Dorsolateral prefrontal cortex (tissue), 120 donors: ENCODE measurements at regions of chr9 and their contacts with region 1.

Region 1: GRCh38 chr9:130343445-130343918 is 77.9 kb downstream of the HMCN2 start:
- DNase-seq: peak in 3 of 10 donors; percentile 13 to 27 (median 21)
- H3K4me3 ChIP-seq: no peak overlapping the region
- H3K27ac ChIP-seq: no peak overlapping the region
- H3K27me3 ChIP-seq: peaks cover 0 to 6% (median 0%) of the 10 kb centered on the region in 45 donors
- CTCF ChIP-seq: peak in 55 of 56 donors; percentile 34 to 75 (median 63)

Region 2: DNA sequence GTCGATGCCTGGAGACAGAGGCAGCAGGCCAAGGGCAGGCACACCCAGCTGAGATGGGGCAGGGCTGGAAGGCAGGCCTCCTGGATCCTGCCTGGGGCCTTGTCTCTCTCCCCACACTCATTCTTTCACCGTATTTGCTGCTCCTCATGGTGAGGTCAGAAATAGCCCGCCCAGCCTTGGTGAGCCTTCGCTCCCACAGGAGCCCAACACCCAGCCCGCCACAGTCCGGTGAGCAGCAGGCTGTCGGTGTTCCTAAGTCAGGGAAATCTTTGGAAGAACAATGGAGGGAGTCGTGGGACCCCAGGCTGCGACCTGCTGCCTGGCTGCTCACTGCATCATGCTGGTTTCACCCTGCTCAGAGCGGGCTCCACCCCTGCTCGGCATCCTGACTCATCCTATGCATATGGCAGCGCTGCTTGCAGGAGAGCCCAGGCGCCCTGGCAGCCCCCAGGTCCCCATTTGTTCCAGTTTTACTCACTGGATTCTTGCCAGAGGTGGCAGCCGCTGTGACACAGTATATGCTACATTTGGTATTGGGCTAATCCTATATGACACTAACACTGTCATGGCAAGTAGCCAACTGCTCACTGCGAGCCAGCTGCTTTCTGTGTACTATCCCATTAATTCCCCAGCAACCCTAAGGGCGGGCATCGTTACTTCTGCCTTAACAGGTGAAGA is 224.5 kb before region 1 on chr9:
- intact Hi-C with region 1: loop called in 1 of 2 experiments (anchors 10 kb)
- DNase-seq: peak in 1 of 10 donors; percentile 54
- H3K4me3 ChIP-seq: no peak overlapping the region
- H3K27ac ChIP-seq: peak overlapping the region in 54 of 59 donors; percentile 4 to 77 (median 64)
- H3K27me3 ChIP-seq: no peaks in the 10 kb centered on the region
- CTCF ChIP-seq: no peak

Region 3: GRCh38 chr9:130143958-130144366 is 199.5 kb before region 1 on chr9:
- intact Hi-C with region 1: no loop called
- DNase-seq: no peak
- H3K4me3 ChIP-seq: peak overlapping the region in 8 of 59 donors; percentile 5 to 26 (median 14)
- H3K27ac ChIP-seq: peak overlapping the region in 9 of 59 donors; percentile 19 to 60 (median 41)
- H3K27me3 ChIP-seq: peaks cover 0 to 4% (median 0%) of the 10 kb centered on the region in 45 donors
- CTCF ChIP-seq: no peak

Region 4: GRCh38 chr9:130298663-130299279 is 44.7 kb before region 1 on chr9:
- intact Hi-C with region 1: no loop called
- DNase-seq: no peak
- H3K4me3 ChIP-seq: no peak overlapping the region
- H3K27ac ChIP-seq: no peak overlapping the region
- H3K27me3 ChIP-seq: peaks cover 0 to 12% (median 0%) of the 10 kb centered on the region in 45 donors
- CTCF ChIP-seq: no peak

Region 5: DNA sequence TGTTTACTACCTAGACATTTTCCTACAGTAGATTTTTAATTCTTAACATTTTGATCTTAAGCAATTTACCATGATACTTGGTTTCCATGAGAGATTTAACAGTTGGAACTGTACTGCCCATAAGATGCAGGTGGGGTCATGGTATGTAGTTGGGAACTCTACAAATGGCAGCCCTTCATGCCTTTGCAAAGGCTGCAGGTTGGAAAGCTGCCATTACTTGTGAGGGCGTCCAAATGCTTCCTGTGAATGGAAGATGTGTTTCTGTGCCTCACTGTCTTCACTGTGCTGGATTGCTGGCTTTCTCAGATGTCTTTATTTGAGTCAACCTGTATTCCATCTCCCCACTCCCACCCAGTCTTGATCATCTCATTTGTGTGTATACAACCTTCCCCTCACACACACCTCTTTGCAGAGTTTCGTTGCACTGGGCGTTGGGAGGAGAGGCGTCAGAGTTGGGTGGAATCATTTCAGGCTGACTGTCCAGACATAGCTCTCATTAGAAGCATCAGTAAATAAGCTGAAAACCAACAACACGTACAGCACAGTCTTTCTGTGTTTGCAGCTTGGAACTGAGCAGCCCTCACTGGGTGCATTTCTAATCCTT is 476.8 kb after region 1 on chr9:
- intact Hi-C with region 1: no loop called
- DNase-seq: peak in 2 of 10 donors; percentile 27 to 47
- H3K4me3 ChIP-seq: no peak overlapping the region
- H3K27ac ChIP-seq: peak overlapping the region in 40 of 59 donors; percentile 2 to 66 (median 38)
- H3K27me3 ChIP-seq: no peaks in the 10 kb centered on the region
- CTCF ChIP-seq: no peak